ENCODE measurements at regions of chr11 and their contacts with region 1.

Region 1: GRCh38 chr11:66958232-66958955 is at the start of gene PC:
- DNase-seq: peak; percentile 99 to 100 (median 100)
- H3K4me3 ChIP-seq: peak within 1 kb of the TSS; percentile 58 to 87 (median 75)
- H3K27ac ChIP-seq: peak within 1 kb of the TSS; percentile 55 to 95 (median 86)
- H3K27me3 ChIP-seq: no peaks in the 10 kb centered on the region
- CTCF ChIP-seq: peak in 30 of 56 donors; percentile 7 to 59 (median 27)
- total RNA-seq, gene PC: 86.1 to 199 (median 121) TPM

Region 2: GRCh38 chr11:66842896-66843775 is 115.3 kb before region 1 on chr11 and contains the start of gene RCE1:
- intact Hi-C with region 1: loop called (anchors 1 to 5 kb)
- DNase-seq: peak; percentile 82 to 95 (median 86)
- H3K4me3 ChIP-seq: peak within 1 kb of the TSS; percentile 72 to 100 (median 99)
- H3K27ac ChIP-seq: peak within 1 kb of the TSS; percentile 72 to 99 (median 94)
- H3K27me3 ChIP-seq: no peaks in the 10 kb centered on the region
- CTCF ChIP-seq: peak in 21 of 56 donors; percentile 7 to 54 (median 25)
- total RNA-seq, gene RCE1: 9.8 to 28.2 (median 16.6) TPM

Region 3: GRCh38 chr11:66855574-66856495 is 102.6 kb before region 1 on chr11:
- intact Hi-C with region 1: loop called (anchors 1 to 5 kb)
- DNase-seq: peak; percentile 84 to 97 (median 93)
- H3K4me3 ChIP-seq: peak overlapping the region; percentile 55 to 90 (median 70)
- H3K27ac ChIP-seq: peak overlapping the region; percentile 68 to 98 (median 94)
- H3K27me3 ChIP-seq: no peaks in the 10 kb centered on the region
- CTCF ChIP-seq: peak in 21 of 56 donors; percentile 5 to 41 (median 22)

Region 4: GRCh38 chr11:66883016-66883968 is 75.1 kb before region 1 on chr11:
- intact Hi-C with region 1: loop called (anchors 2 kb)
- DNase-seq: peak; percentile 81 to 89 (median 84)
- H3K4me3 ChIP-seq: peak overlapping the region in 58 of 59 donors; percentile 6 to 65 (median 45)
- H3K27ac ChIP-seq: peak overlapping the region; percentile 38 to 96 (median 92)
- H3K27me3 ChIP-seq: no peaks in the 10 kb centered on the region
- CTCF ChIP-seq: peak; percentile 49 to 88 (median 79)

Region 5: GRCh38 chr11:66894141-66894540 is 64.3 kb before region 1 on chr11:
- intact Hi-C with region 1: no loop called
- DNase-seq: no peak
- H3K4me3 ChIP-seq: no peak overlapping the region
- H3K27ac ChIP-seq: no peak overlapping the region
- H3K27me3 ChIP-seq: no peaks in the 10 kb centered on the region
- CTCF ChIP-seq: no peak

Region 6: GRCh38 chr11:66907751-66908630 is 50.4 kb before region 1 on chr11:
- intact Hi-C with region 1: loop called in 1 of 2 experiments (anchors 5 kb)
- DNase-seq: peak in 1 of 10 donors; percentile 16
- H3K4me3 ChIP-seq: no peak overlapping the region
- H3K27ac ChIP-seq: peak overlapping the region in 39 of 59 donors; percentile 1 to 74 (median 51)
- H3K27me3 ChIP-seq: no peaks in the 10 kb centered on the region
- CTCF ChIP-seq: no peak

Region 7: DNA sequence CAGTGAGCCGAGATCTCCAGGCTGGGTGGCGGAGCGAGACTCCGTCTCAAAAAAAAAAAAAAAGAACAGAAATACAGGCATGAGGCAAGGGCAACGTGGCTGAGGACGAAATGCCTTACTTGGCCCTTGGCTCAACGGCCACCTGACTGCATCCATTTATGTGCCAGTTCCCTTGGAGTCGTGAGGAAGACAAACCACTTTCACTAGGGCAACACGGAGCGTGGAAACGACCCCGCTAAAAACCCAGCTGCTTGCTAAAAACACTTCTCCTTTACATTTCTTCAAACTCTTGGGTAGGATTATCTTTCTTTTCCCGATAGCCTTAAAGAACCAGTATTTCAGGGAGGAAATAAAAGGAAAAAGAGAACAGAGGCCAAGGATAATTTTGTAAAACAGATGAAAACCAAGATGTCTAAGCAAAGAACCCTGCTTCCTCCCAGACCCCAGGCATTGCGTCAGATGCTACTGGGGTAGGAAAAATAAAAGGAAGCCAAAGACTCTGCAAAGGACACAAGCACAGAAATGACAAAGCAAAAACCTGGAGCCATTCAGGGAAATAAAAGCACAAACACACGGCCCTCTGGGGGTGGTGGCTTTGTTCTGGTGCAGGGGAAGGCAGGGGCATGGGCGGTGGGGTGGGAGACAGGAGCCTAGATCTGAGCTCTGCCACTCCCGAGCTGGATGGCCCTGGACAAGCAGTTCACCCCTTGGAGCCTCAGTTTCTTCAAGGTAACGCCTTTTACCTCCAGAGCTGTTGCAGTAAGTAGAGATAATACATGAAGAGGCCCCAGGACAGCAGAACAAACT is 37.2 kb before region 1 on chr11:
- intact Hi-C with region 1: loop called (anchors 2 to 5 kb)
- DNase-seq: no peak
- H3K4me3 ChIP-seq: peak overlapping the region in 6 of 59 donors; percentile 1 to 22 (median 8)
- H3K27ac ChIP-seq: peak overlapping the region in 43 of 59 donors; percentile 5 to 78 (median 48)
- H3K27me3 ChIP-seq: no peaks in the 10 kb centered on the region
- CTCF ChIP-seq: no peak

Region 8: DNA sequence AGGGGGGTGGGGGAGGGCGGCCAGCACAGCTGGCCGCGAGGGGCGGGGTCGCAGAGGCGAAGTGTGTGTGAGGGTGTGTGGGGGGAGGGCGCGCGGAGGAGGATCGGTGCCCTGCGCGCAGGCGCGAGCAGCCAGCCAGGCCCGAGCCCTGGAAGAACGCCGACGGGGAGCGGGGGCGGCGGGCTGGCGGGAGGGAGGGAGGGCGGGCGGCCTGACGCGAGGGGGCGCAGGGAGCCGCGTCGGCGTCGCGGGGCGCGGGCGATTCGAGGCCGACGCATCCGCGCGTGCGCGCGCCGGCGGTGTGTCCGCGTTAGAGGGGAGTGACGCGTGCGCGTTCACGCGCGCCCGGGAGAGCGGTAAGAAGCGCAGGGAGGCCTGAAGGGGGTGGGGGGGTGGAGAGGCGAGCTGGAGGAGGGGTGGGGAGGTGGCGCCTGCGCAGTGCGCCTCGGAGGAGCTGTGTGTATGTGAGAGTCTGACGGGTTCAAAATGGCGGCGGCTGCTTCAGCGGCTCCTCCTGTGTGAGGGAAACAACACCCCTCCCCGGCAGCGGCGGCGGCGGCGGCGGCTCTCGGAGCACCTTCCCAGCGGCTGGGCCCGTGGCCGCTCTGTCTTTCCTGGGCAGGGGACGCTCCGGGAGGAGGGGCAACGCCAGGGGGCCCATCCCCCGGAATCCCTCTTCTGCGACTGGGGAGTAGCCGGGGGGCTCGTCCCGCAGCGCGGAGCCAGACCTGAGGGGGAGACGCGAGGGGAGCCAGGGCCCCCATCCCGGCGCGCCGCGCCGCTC is 160.6 kb after region 1 on chr11 and contains the start of gene KDM2A:
- intact Hi-C with region 1: loop called in 1 of 2 experiments (anchors 2 kb)
- DNase-seq: peak; percentile 94 to 99 (median 98)
- H3K4me3 ChIP-seq: peak within 1 kb of the TSS; percentile 68 to 97 (median 90)
- H3K27ac ChIP-seq: peak within 1 kb of the TSS; percentile 90 to 100 (median 98)
- H3K27me3 ChIP-seq: no peaks in the 10 kb centered on the region
- CTCF ChIP-seq: peak in 47 of 56 donors; percentile 9 to 74 (median 45)
- total RNA-seq, gene KDM2A: 56.5 to 97.4 (median 71.9) TPM